ENCODE measurements at regions of chr4 and their contacts with region 1.

Region 1: DNA sequence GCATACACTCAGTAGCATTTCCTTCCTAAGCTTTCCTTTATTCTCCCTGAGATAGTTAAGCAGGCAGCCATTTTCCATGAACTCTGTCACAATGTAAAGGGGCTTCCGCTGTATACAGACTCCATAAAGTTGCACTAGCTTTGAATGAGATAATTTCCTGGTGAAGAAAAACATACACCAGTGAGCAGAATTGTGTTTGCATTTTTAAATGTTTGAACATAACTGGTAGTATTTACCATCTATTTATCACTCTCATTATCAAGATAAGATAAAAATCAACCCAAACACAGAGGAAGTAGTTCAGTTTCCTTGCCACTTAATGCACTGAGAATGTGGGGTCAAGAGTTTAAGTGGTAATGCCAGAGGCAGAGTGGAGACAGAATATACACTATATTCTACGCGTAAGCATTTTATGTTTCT is 54.1 kb downstream of the TXK start:
- DNase-seq: no peak
- H3K4me3 ChIP-seq: no peak overlapping the region
- H3K27ac ChIP-seq: no peak overlapping the region
- H3K4me1 ChIP-seq: no peaks in the 10 kb centered on the region
- H3K27me3 ChIP-seq: no peaks in the 10 kb centered on the region
- CTCF ChIP-seq: no peak
- POLR2A ChIP-seq: no peak

Region 2: DNA sequence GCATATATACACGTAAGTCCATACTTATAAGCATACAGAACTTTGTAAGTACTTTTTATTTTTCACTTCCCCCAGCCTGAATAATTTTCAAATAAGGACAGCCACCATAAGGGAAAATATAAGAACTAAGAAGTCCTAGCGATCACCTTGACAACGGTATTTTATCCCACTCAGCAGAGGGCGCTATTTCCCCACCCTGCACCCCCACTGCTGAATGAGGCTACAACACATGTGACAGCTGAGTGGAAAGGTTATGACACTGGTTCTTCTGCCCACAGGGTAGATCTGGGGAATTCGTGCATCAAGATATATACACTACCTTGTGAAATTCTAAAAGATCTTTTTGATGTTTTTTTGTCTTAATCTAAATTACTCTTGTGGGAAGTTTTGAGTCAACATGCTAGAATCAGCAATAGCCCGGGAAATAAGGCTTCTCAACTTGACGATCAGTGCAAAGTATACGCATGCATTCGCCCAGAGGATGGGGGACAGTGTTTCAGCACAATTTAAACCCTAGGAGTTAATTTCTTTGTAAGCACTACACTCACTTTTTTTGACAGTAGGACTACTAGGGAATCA is 393.6 kb before region 1 on chr4:
- intact Hi-C with region 1: loop called (anchors 10 kb)
- DNase-seq: peak; percentile 26
- H3K4me3 ChIP-seq: no peak overlapping the region
- H3K27ac ChIP-seq: no peak overlapping the region
- H3K4me1 ChIP-seq: no peaks in the 10 kb centered on the region
- H3K27me3 ChIP-seq: no peaks in the 10 kb centered on the region
- CTCF ChIP-seq: peak in 3 of 4 experiments; percentile 46 to 49 (median 49)
- POLR2A ChIP-seq: no peak

Region 3: GRCh38 chr4:47933840-47934239 is 146.1 kb before region 1 on chr4:
- intact Hi-C with region 1: loop called (anchors 10 kb)
- DNase-seq: no peak
- H3K4me3 ChIP-seq: no peak overlapping the region
- H3K27ac ChIP-seq: no peak overlapping the region
- H3K4me1 ChIP-seq: no peaks in the 10 kb centered on the region
- H3K27me3 ChIP-seq: no peaks in the 10 kb centered on the region
- CTCF ChIP-seq: peak; percentile 31 to 65 (median 58)
- POLR2A ChIP-seq: no peak